Activated naive CD4-positive, alpha-beta T cell treated with anti-CD3 and anti-CD28 coated beads for 36 hours (primary cell): ENCODE measurements at regions of chr17 and their contacts with region 1.

Region 1: DNA sequence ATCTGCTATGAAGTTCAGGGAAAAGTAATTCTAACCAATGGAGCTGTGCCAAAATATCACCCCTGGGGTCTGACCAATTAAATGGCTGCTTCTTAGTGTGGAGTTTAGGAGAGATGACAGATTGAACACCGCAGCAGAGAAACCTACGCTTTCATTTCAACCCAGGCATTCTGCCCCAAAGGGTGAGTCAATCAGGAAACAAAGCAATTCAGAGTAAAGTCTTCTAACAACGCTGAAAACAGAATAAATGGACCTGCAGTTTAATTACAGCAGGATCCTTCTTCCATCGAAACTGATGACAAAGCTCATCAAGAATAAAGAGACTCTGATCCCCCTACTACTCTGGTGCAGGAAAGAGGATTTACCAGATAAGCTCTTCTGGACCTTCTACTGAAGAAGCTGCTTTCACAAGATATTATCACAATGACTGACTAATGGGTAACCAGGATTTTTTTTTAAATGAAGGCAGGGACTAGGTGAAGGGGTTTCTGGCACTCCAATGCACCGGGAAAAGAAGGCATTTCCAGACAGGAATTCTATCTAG is 16.7 kb downstream of the RFFL start:
- DNase-seq: peak; percentile 84
- H3K4me3 Mint-ChIP-seq: peak overlapping the region; percentile 77
- H3K27ac Mint-ChIP-seq: peak overlapping the region; percentile 94
- H3K4me1 Mint-ChIP-seq: peaks cover 73% of the 10 kb centered on the region
- H3K27me3 Mint-ChIP-seq: no peaks in the 10 kb centered on the region

Region 2: DNA sequence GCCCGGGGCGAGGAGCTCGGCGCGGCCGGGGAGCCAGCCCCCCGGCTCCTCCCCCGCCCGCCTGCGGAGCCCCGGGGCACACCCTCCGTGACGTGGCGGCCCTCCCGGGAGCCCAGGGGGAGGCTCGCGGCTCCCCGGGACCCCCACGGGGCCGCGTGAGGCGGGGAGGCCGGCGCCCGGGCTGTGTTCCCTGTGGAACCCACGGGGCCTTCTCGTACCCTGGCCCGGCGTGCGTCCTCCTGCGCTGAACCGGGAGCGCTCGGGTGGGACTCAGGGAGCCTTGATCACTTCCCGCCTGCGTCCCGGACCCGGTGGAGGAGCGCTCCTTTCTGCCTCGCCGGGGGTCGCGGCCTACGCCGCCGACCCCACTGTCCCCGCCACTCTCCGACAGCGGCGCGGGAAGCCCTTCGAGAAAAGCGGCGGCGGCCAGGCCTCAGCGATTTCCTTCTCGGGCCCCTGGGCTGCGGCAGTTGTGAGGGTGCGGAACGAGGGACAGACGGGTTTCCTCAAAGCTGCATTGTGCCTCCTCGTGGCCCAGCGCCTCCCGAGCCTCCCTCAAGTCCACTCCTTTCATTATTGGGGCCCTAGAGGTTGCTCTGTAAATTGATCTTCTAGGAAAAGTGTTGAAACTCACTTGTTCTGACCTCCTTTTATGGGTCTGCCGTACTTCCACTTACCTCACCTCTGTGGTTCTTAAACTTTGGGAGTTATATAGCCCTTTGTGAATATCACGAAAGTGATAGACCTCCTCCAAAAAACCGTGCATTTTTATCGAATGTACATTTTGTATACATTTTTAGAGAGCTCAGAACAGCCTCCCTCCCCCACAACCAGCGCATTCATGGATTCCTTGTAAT is 65.9 kb before region 1 on chr17:
- CTCF ChIA-PET with region 1: no interaction called
- intact Hi-C with region 1: loop called (anchors 2 kb)
- DNase-seq: peak; percentile 72
- H3K4me3 Mint-ChIP-seq: peak overlapping the region; percentile 95
- H3K27ac Mint-ChIP-seq: peak overlapping the region; percentile 91
- H3K4me1 Mint-ChIP-seq: peaks cover 43% of the 10 kb centered on the region
- H3K27me3 Mint-ChIP-seq: no peaks in the 10 kb centered on the region

Region 3: GRCh38 chr17:34998205-34998604 is 48.6 kb before region 1 on chr17:
- CTCF ChIA-PET with region 1: no interaction called
- intact Hi-C with region 1: no loop called
- DNase-seq: peak; percentile 88
- H3K4me3 Mint-ChIP-seq: no peak overlapping the region
- H3K27ac Mint-ChIP-seq: peak overlapping the region; percentile 83
- H3K4me1 Mint-ChIP-seq: peaks cover 6% of the 10 kb centered on the region
- H3K27me3 Mint-ChIP-seq: no peaks in the 10 kb centered on the region

Region 4: DNA sequence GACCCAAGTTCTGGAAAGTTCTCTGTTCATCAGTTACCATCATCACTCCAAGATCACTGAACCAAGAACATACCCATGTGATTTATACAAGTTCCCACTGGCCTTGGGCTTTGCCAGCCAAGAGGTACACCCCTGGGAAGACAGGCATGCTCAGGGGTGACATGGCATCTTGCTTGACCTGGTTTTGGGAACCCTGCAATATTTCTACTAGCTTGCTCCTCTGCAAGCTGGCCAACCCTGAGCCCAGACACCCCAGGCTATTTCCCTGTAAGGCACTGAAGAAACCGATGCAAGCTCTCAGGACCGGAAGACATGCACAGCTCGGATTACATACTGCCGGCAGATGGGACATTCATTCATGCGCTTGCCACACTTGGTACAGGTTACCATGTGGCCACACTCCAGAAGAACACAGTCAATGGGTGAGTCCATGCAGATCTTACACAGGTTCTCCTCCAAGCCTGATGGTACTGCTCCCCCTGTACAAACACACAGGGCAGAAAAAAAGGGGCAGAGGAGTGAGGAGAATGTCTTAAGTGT is 35.1 kb before region 1 on chr17:
- CTCF ChIA-PET with region 1: no interaction called
- intact Hi-C with region 1: no loop called
- DNase-seq: no peak
- H3K4me3 Mint-ChIP-seq: no peak overlapping the region
- H3K27ac Mint-ChIP-seq: no peak overlapping the region
- H3K4me1 Mint-ChIP-seq: no peaks in the 10 kb centered on the region
- H3K27me3 Mint-ChIP-seq: no peaks in the 10 kb centered on the region

Region 5: DNA sequence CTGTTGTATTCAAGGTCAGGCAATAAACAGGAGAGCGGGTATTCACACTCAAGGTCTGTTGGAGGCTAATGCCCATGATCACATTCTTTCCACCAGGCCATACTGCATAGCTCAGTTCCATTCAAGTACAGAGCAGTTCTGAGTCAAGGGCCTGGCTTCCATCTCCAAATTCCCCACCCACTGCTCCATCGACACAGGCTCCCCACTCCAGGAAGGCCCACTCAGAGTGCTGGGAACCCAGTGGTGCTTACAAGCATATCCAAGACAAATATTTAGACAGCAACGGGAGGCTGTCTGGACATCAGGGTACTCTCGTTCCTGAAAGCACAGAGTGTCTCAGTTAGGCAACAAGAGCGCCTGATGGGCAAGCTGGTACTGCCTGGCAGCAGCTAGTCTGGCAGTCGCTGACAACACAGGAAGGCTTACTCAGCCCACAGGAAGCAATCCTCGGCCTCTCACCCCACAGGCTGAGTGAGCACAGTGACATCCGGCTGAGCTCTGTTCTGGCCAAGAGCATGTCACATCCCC is 24.2 kb before region 1 on chr17:
- CTCF ChIA-PET with region 1: interaction called, 5 read pairs
- intact Hi-C with region 1: loop called (anchors 1 kb)
- DNase-seq: peak; percentile 91
- H3K4me3 Mint-ChIP-seq: peak overlapping the region; percentile 81
- H3K27ac Mint-ChIP-seq: peak overlapping the region; percentile 98
- H3K4me1 Mint-ChIP-seq: peaks cover 35% of the 10 kb centered on the region
- H3K27me3 Mint-ChIP-seq: no peaks in the 10 kb centered on the region

Region 6: DNA sequence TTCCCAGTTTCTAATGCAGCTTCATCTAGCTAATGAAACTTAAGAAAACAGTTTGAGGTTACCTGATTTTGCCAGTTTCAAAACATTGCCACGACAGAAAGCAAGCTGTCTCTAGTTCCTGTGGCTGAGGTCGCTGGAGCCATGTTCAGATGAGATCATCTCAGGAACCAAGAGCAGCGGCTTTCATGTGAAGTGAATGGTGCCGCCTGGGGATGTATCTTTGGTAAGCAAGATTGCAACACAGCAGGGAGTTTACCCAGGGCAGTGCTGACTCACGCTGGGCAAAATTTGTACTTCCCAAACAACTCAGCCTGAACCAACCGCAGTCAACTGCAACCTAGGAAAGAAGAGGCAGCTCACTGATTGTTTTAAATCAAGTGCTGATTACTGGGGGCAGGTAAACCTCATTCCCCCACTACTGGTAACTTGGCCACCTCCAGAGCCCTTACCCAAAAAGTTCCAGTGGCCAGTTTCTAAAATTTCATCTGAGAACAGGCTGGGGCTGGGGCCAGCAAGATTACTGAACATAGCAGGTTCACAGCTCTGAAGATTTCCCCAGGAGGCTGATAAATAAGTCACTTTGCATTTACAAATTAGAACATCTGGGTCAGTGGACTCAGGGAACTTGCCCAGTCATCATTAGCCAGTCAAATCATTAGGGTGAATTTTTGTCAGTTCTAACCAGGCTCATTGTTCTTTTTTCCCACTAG is 16.9 kb after region 1 on chr17 and contains the start of gene RFFL:
- CTCF ChIA-PET with region 1: interaction called, 16 read pairs
- intact Hi-C with region 1: loop called (anchors 1 kb)
- DNase-seq: peak; percentile 97
- H3K4me3 Mint-ChIP-seq: peak within 1 kb of the TSS; percentile 23
- H3K27ac Mint-ChIP-seq: peak within 1 kb of the TSS; percentile 65
- H3K4me1 Mint-ChIP-seq: peaks cover 57% of the 10 kb centered on the region
- H3K27me3 Mint-ChIP-seq: no peaks in the 10 kb centered on the region
- total RNA-seq, gene RFFL: 17.8 to 18.2 TPM

Region 7: GRCh38 chr17:35073991-35074627 is 27.3 kb after region 1 on chr17:
- CTCF ChIA-PET with region 1: no interaction called
- intact Hi-C with region 1: loop called (anchors 1 kb)
- DNase-seq: peak; percentile 45
- H3K4me3 Mint-ChIP-seq: peak overlapping the region; percentile 36
- H3K27ac Mint-ChIP-seq: peak overlapping the region; percentile 87
- H3K4me1 Mint-ChIP-seq: peaks cover 61% of the 10 kb centered on the region
- H3K27me3 Mint-ChIP-seq: no peaks in the 10 kb centered on the region

Region 8: GRCh38 chr17:35082073-35082657 is 35.4 kb after region 1 on chr17:
- CTCF ChIA-PET with region 1: interaction called, 3 read pairs
- intact Hi-C with region 1: loop called (anchors 1 kb)
- DNase-seq: no peak
- H3K4me3 Mint-ChIP-seq: peak overlapping the region; percentile 4
- H3K27ac Mint-ChIP-seq: peak overlapping the region; percentile 57
- H3K4me1 Mint-ChIP-seq: peaks cover 76% of the 10 kb centered on the region
- H3K27me3 Mint-ChIP-seq: no peaks in the 10 kb centered on the region

Region 9: GRCh38 chr17:35214631-35215273 is 167.9 kb after region 1 on chr17:
- CTCF ChIA-PET with region 1: no interaction called
- intact Hi-C with region 1: loop called (anchors 5 kb)
- DNase-seq: peak; percentile 48
- H3K4me3 Mint-ChIP-seq: peak overlapping the region; percentile 45
- H3K27ac Mint-ChIP-seq: peak overlapping the region; percentile 88
- H3K4me1 Mint-ChIP-seq: peaks cover 84% of the 10 kb centered on the region
- H3K27me3 Mint-ChIP-seq: no peaks in the 10 kb centered on the region